Sciatic nerve (tissue), 2 donors: ENCODE measurements at regions of chr19 and their contacts with region 1.

Region 1: GRCh38 chr19:4732680-4733114 is 9.1 kb upstream of the DPP9 start:
- DNase-seq: no peak
- ATAC-seq: peak; percentile 89

Region 2: DNA sequence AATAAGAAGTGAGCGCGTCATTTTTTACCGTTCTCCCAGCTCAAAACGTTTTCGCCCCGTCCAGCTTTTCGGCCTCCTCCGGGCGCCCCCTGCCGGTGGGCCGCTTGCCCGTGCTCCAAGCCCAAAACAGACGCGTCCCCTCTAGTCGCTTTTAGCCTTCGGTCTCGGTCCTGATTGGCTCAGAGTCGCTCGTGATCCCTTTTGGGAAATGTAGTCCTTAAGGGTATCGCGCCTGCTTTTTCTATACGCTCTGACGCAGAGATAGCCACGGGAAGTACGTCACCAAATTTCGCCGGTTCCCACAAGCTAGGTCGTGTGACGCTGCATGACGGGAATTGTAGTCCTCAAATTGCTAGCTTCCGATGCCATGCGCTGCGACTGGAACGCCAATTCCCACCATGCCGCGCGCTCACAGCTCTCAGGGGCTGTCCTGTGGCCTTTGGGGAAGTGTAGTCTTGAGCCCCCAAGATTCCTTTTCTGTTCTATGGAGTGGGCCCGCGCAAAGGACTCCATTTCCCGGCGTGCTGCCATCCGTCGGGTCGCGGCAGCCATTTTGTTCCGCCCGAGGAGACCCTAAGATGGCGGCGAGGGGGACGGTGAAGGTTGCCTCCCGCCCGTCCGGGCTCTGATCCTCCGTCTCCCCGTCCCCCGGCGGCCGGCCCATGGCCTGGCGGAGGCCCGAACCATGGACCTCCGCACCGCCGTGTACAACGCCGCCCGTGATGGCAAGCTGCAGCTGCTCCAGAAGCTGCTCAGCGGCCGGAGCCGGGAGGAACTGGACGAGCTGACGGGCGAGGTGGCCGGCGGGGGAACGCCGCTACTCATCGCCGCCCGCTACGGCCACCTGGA is 58.7 kb after region 1 on chr19 and contains the start of gene FEM1A:
- intact Hi-C with region 1: loop called (anchors 10 kb)
- DNase-seq: peak; percentile 99
- ATAC-seq: peak; percentile 99
- total RNA-seq, gene FEM1A: 7.5 TPM